Mammary epithelial cell (primary cell): ENCODE measurements at regions of chr14 and their contacts with region 1.

Region 1: DNA sequence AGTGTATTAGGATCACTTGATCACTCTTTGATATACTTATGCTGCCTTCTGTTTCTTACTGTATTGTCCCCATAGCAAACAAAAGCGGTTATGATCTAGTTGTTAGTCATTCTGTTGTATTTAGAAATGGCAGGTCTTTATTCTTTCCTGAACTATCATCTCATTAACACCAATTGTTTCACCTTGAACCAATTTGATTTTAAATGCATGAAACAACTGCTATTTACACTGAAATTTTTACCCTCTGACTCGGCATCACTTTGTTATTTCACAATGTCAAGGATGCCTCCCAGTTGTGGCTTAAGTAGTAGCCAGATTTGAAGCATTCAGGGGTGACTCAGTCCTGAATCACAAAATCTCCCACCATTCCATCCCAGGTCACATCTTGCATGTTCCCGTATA is 303.5 kb downstream of the EGLN3 start:
- DNase-seq: peak; percentile 96
- H3K4me3 ChIP-seq: no peak overlapping the region
- H3K27ac ChIP-seq: peak overlapping the region; percentile 91
- H3K4me1 ChIP-seq: peaks cover 19% of the 10 kb centered on the region
- H3K27me3 ChIP-seq: no peaks in the 10 kb centered on the region
- CTCF ChIP-seq: no peak

Region 2: GRCh38 chr14:33545696-33546095 is 101.7 kb before region 1 on chr14:
- CTCF ChIA-PET with region 1: no interaction called
- dilution Hi-C with region 1: no loop called
- in situ Hi-C with region 1: no loop called
- intact Hi-C with region 1: loop called (anchors 1 kb)
- DNase-seq: peak; percentile 90
- H3K4me3 ChIP-seq: no peak overlapping the region
- H3K27ac ChIP-seq: no peak overlapping the region
- H3K4me1 ChIP-seq: peaks cover 15% of the 10 kb centered on the region
- H3K27me3 ChIP-seq: no peaks in the 10 kb centered on the region
- CTCF ChIP-seq: no peak

Region 3: DNA sequence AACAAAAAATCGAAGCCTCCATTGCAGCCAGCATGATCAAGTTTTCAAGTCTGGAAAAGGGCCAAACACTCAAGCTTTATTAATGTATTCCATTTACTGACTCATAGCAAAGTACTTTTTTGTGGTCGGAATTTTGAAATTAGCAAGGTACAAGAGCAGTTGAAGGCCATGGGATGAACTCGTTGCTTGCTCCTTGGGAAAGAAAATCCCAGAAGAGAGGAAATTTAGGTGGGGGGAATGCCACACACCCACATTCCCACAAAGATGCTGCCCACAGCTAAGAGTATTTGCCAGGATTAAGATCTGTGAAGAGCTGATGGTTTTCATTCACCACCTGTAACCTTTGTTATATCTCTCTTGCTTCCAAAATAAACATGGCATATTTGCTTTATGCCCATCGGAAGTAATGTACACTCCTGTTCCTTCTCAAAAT is 30.2 kb before region 1 on chr14:
- CTCF ChIA-PET with region 1: no interaction called
- dilution Hi-C with region 1: no loop called
- in situ Hi-C with region 1: no loop called
- intact Hi-C with region 1: loop called (anchors 2 kb)
- DNase-seq: peak; percentile 82
- H3K4me3 ChIP-seq: no peak overlapping the region
- H3K27ac ChIP-seq: no peak overlapping the region
- H3K4me1 ChIP-seq: peaks cover 13% of the 10 kb centered on the region
- H3K27me3 ChIP-seq: no peaks in the 10 kb centered on the region
- CTCF ChIP-seq: no peak